Prostate gland (tissue), 2 donors: ENCODE measurements at regions of chr9 and their contacts with region 1.

Region 1: DNA sequence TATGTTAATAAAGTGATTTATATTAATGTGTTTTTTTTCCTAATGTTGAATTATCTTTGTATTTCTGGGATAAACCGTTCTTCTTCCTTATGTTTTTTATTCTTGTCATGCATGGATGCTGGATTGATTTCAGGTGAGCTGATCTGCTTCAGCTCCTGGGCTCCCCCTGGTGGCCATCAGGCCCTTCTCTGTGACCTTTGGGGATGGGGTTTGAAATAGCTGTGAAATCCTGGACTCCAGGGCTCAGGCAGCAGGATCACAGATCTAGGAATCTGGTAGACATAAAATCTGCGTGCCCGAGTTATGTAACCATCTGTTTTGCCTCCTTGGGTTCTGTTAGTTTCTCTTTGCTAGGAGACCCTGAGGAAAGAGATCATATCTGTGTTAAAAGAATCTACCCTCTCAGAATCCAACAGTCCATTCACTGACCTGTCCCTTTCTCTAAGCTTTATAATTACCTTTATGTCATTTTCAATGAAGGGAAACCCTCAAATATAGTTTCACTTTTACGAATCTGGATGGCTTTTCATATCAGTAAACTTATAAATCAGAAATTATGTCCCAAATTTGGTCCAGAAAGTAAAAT is 12.2 kb upstream of the OR13J1 start:
- DNase-seq: peak; percentile 76
- H3K4me3 ChIP-seq: no peak overlapping the region
- H3K27ac ChIP-seq: no peak overlapping the region
- H3K4me1 ChIP-seq: no peaks in the 10 kb centered on the region
- H3K27me3 ChIP-seq: no peaks in the 10 kb centered on the region
- CTCF ChIP-seq: peak; percentile 80 to 93 (median 92)
- POLR2A ChIP-seq: no peak

Region 2: DNA sequence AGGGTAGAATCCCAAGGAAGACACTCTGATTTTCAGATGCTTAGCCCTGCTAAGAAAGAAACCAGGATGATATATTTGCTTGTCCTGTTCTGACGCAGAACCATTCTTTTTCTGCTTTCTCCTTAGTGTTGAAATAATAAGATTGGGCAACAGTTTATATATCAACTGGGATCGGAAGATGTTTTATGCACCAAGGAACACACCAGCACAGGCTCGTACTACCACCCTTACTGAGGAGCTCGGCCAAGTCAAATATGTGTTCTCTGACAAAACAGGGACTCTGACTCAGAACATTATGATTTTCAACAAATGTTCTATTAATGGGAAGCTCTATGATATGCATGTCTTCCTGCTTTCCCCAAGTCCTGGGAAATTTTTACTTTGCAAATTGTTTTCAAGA is 411.5 kb before region 1 on chr9:
- intact Hi-C with region 1: no loop called
- DNase-seq: peak; percentile 66
- H3K4me3 ChIP-seq: no peak overlapping the region
- H3K27ac ChIP-seq: peak overlapping the region; percentile 30 to 49
- H3K4me1 ChIP-seq: no peaks in the 10 kb centered on the region
- H3K27me3 ChIP-seq: no peaks in the 10 kb centered on the region
- CTCF ChIP-seq: no peak
- POLR2A ChIP-seq: no peak

Region 3: DNA sequence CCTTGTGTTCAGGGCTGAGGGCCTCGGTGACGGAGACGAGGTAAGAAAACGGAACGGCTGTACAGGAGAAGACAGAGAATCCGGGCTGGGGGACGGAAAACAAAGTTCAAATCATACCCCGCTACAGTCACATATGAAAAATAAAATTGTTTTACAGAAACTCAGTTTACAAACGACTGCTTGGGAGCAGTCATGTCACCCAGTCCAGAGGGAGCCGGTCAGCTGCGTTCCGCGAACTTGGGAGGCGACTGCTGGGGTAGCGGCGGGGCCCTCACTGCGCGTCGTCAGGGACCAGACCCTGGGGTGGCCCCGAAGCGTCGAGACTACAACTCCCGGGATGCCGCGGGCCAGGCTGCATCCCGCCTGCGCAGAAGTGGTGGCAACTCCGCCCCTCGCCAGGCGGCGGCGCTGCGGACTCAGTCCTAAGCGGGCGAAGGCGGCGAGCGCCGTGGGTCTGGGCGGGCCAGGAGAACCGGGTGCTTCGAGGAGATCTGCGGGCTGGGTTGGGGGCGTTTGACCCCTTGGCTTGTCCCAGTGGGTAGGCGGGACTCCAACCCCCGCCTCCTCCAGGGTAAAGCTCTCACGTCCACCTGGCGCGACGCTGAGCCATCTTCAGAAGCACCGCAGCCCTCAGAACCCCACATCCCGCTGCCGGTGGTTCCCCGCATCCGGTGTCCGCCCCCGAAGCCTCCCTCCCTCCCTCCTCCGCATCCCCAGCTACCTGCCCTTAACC is 235.7 kb before region 1 on chr9:
- intact Hi-C with region 1: loop called (anchors 5 kb)
- DNase-seq: peak; percentile 91
- H3K4me3 ChIP-seq: peak overlapping the region; percentile 41 to 52
- H3K27ac ChIP-seq: peak overlapping the region; percentile 84 to 86
- H3K4me1 ChIP-seq: peaks cover 4% of the 10 kb centered on the region
- H3K27me3 ChIP-seq: no peaks in the 10 kb centered on the region
- CTCF ChIP-seq: peak; percentile 89 to 99 (median 95)
- POLR2A ChIP-seq: peak; percentile 85

Region 4: DNA sequence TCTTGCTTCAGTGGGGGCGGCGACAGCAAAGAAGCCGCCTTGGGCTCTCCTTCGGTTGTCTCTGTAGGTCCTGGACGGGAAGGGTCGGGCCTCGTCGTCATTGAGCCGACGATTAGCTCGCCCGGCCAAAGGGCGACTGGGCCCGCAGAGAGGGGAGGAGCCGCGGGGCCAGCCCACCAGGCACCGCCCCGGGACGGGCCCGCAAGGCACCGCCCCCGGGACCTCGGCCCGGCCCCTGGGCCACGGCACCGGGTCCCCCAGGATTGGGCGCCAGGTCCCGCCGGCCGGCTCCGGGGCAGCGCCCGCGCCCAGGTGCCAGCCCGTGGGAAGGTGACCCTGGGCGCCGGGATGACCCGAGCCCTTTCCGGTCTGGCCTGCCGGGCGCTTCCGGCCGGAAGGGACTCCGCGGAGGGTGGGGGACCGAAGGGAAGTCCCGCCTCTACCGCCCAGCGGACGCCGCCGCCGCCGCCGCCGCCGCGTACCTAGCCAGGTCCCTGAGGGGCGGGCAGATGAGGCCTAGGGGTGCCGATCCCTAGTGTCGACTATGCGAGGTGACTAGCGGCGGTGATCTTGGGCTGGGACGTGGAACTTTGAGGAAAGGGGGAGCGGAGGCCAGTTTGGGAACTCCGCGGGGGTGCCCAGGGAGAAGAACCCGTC is 133.4 kb before region 1 on chr9 and contains the starts of genes GBA2 and RGP1:
- intact Hi-C with region 1: no loop called
- DNase-seq: peak; percentile 76
- H3K4me3 ChIP-seq: peak within 1 kb of the TSS; percentile 72 to 89
- H3K27ac ChIP-seq: peak within 1 kb of the TSS; percentile 80 to 88
- H3K4me1 ChIP-seq: peaks cover 21% of the 10 kb centered on the region
- H3K27me3 ChIP-seq: no peaks in the 10 kb centered on the region
- CTCF ChIP-seq: peak in 1 of 4 experiments; percentile 15
- POLR2A ChIP-seq: peak; percentile 66
- total RNA-seq, gene GBA2: 48.5 to 55.4 TPM
- total RNA-seq, gene RGP1: 19.4 to 30.3 TPM

Region 5: GRCh38 chr9:35790385-35791296 is 91.7 kb before region 1 on chr9:
- intact Hi-C with region 1: loop called (anchors 1 kb)
- DNase-seq: peak; percentile 74
- H3K4me3 ChIP-seq: peak overlapping the region; percentile 41 to 50
- H3K27ac ChIP-seq: peak overlapping the region; percentile 36 to 76
- H3K4me1 ChIP-seq: no peaks in the 10 kb centered on the region
- H3K27me3 ChIP-seq: no peaks in the 10 kb centered on the region
- CTCF ChIP-seq: peak; percentile 70 to 90 (median 84)
- POLR2A ChIP-seq: no peak

Region 6: GRCh38 chr9:35829084-35829763 is 53.1 kb before region 1 on chr9 and contains the start of gene TMEM8B:
- intact Hi-C with region 1: loop called (anchors 5 kb)
- DNase-seq: peak; percentile 99
- H3K4me3 ChIP-seq: peak within 1 kb of the TSS; percentile 73 to 99
- H3K27ac ChIP-seq: peak within 1 kb of the TSS; percentile 89 to 99
- H3K4me1 ChIP-seq: peaks cover 35% of the 10 kb centered on the region
- H3K27me3 ChIP-seq: no peaks in the 10 kb centered on the region
- CTCF ChIP-seq: peak in 1 of 4 experiments; percentile 10
- POLR2A ChIP-seq: peak; percentile 70
- total RNA-seq, gene TMEM8B: 15.8 to 25.9 TPM

Region 7: GRCh38 chr9:36487482-36488388 is 605.4 kb after region 1 on chr9:
- intact Hi-C with region 1: no loop called
- DNase-seq: peak; percentile 87
- H3K4me3 ChIP-seq: peak overlapping the region; percentile 84 to 95
- H3K27ac ChIP-seq: peak overlapping the region; percentile 91 to 92
- H3K4me1 ChIP-seq: no peaks in the 10 kb centered on the region
- H3K27me3 ChIP-seq: no peaks in the 10 kb centered on the region
- CTCF ChIP-seq: peak in 2 of 4 experiments; percentile 38 to 46
- POLR2A ChIP-seq: peak; percentile 84